ENCODE measurements at regions of chr11 and their contacts with region 1.

Region 1: GRCh38 chr11:45771566-45772448 is 33.1 kb upstream of the SLC35C1 start:
- DNase-seq: peak; percentile 77 to 89 (median 85)
- H3K4me3 ChIP-seq: peak overlapping the region; percentile 40 to 80 (median 63)
- H3K27ac ChIP-seq: peak overlapping the region in 45 of 59 donors; percentile 0 to 84 (median 53)
- H3K27me3 ChIP-seq: no peaks in the 10 kb centered on the region
- CTCF ChIP-seq: peak; percentile 54 to 98 (median 90)

Region 2: GRCh38 chr11:45339729-45340519 is 431.9 kb before region 1 on chr11:
- intact Hi-C with region 1: loop called (anchors 2 to 5 kb)
- DNase-seq: peak; percentile 87 to 94 (median 90)
- H3K4me3 ChIP-seq: peak overlapping the region in 57 of 59 donors; percentile 10 to 61 (median 38)
- H3K27ac ChIP-seq: peak overlapping the region in 7 of 59 donors; percentile 3 to 46 (median 21)
- H3K27me3 ChIP-seq: peaks cover 0 to 4% (median 0%) of the 10 kb centered on the region in 45 donors
- CTCF ChIP-seq: peak; percentile 67 to 98 (median 92)

Region 3: DNA sequence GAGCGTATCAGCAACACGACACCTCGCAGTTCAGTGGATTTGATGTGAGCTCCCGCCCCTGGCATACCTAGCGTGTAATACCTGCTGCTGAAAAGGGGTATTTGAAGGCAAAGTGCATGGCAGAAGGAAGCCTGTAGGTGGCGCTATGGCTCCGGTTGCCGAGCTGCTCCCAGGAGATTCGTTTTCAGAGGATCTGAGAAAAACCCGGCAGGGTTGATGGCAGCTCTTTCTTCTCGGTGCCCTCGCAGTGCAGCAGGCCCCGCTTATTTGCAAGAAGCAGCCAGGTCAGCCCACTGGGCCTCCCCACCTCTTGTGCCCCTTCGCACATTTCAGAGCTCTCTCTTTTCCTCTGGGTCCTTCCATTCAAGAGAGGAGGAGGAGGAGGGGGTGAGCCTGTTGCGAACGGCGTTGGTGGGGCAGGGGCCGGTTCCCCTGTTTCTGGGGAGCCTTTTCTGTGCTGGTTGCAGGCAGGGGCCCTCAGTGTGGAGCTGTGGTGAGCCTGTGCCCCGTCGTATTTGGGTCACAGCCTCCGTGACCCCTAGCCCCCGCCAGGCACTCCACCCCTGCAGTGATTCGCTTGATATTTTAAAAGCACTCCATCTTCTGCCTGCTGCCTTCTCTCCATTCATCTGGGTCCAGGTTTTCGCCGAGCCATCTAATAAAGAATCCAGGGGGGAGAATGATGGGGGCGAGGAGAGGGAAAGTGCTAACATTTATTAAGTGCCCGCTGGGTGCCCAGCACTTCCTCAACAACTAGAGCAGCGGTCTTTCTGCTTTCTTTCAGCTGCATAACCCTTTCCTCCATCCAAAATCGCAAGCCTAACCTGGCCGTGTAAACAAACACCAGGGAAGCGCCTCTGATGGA is 400.3 kb before region 1 on chr11:
- intact Hi-C with region 1: loop called (anchors 1 to 5 kb)
- DNase-seq: peak; percentile 60 to 87 (median 83)
- H3K4me3 ChIP-seq: peak overlapping the region in 54 of 59 donors; percentile 2 to 58 (median 40)
- H3K27ac ChIP-seq: peak overlapping the region in 50 of 59 donors; percentile 5 to 89 (median 66)
- H3K27me3 ChIP-seq: peaks cover 0 to 8% (median 0%) of the 10 kb centered on the region in 45 donors
- CTCF ChIP-seq: peak; percentile 78 to 98 (median 93)

Region 4: DNA sequence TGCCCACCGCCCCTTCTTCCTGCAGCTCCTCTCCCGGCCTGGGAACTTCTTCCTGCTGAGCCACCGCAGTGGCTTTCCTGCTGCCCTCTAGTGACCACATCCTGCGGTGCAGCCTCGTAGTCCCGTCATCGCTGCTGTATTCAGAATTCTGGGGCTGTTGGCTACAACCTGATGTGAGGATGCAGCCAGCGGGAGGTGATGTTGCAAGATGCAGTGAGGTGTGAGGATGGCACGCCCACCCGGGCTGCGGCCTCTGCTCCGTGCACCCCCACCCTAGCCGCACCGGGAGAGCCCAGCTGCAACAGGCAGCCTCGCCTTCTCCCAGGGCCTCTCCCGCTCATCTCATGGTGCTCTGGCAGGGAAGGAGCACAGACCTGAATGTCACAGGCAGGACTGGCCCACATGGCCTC is 116.5 kb before region 1 on chr11:
- intact Hi-C with region 1: loop called in 1 of 2 experiments (anchors 5 kb)
- DNase-seq: peak; percentile 78 to 89 (median 85)
- H3K4me3 ChIP-seq: peak overlapping the region in 19 of 59 donors; percentile 1 to 32 (median 9)
- H3K27ac ChIP-seq: peak overlapping the region in 51 of 59 donors; percentile 15 to 94 (median 65)
- H3K27me3 ChIP-seq: no peaks in the 10 kb centered on the region
- CTCF ChIP-seq: peak; percentile 75 to 95 (median 91)

Region 5: DNA sequence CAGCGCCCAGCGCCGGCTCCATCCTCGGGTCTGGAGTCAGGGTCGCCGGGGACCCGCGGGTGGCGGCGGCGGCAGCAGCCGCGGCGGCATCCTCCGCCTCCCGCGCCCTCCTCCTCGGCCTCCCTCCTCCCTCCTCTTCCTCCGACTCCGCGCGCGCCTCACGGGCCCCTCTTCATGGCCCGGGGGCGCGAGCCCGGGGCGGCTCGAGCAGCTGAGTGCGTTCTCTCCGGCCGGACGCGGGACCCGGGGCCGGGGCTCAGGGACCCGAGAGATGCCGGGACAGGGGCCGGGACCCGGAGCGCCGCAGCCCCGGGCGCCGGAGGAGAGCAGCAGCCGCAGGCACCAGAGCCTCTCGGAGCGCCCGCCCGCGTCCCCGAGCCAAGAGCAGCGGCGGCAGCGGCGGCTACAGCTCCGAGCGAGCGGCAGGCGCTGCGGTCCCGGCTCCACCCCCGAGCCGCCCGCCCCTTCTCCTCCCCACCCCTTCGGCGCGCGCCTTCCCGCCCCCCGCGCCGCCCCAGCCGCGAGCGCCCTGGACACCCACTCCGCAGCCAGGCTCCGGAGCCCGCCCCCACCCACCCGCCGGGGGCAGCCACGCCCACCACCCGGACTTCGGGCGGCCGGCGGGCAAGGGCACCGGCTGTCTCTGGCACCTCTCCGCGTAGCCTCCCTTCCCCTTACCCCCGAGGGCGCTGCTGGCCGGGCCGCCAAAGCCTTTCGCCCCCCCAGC is 106.4 kb before region 1 on chr11 and contains the start of gene CHST1:
- intact Hi-C with region 1: loop called in 1 of 2 experiments (anchors 5 kb)
- DNase-seq: peak in 7 of 10 donors; percentile 24 to 79 (median 59)
- H3K4me3 ChIP-seq: peak within 1 kb of the TSS; percentile 49 to 90 (median 78)
- H3K27ac ChIP-seq: peak within 1 kb of the TSS in 57 of 59 donors; percentile 48 to 93 (median 84)
- H3K27me3 ChIP-seq: peaks cover 0 to 5% (median 0%) of the 10 kb centered on the region in 45 donors
- CTCF ChIP-seq: peak in 3 of 56 donors; percentile 9 to 40 (median 12)
- total RNA-seq, gene CHST1: 51.7 to 159 (median 100) TPM

Measured in dorsolateral prefrontal cortex (tissue), 120 donors.